ENCODE measurements at regions of chr2 and their contacts with region 1.

Region 1: DNA sequence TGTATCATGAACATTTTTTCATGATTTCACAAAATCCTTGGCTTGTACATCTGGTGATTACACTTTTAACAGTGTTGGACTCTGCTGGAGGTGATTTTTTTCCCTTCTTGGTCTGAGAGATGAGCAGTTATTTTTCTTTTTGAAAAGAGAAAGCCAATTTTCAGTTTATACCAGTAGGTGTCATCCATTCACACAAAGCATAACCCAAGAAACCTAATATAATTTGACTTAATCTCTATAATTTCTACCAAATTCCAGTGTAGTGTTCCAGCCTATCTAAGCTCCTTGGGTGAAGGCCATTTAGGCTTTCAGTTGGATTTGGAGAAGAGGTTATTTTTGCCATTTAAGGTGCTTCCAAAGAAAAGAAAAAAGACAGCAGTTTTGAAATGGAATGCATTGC is 7.7 kb upstream of the ICOS start:
- DNase-seq: peak in 4 of 9 donors; percentile 31 to 50 (median 45)
- ATAC-seq: no peak
- H3K4me3 ChIP-seq: no peak overlapping the region
- H3K4me3 Mint-ChIP-seq: no peak overlapping the region
- H3K27ac ChIP-seq: no peak overlapping the region
- H3K27ac Mint-ChIP-seq: peak overlapping the region in 2 of 9 donors; percentile 2 to 55
- H3K4me1 ChIP-seq: peaks cover 15 to 21% of the 10 kb centered on the region in 2 donors
- H3K4me1 Mint-ChIP-seq: peaks cover 13 to 46% (median 39%) of the 10 kb centered on the region in 7 donors
- H3K27me3 ChIP-seq: no peaks in the 10 kb centered on the region
- H3K27me3 Mint-ChIP-seq: peaks cover 0 to 13% (median 0%) of the 10 kb centered on the region in 5 donors

Region 2: GRCh38 chr2:203799908-203800307 is 128.9 kb before region 1 on chr2:
- CTCF ChIA-PET with region 1: no interaction called
- POLR2A ChIA-PET with region 1: no interaction called
- intact Hi-C with region 1: no loop called
- DNase-seq: no peak
- ATAC-seq: no peak
- H3K4me3 ChIP-seq: no peak overlapping the region
- H3K4me3 Mint-ChIP-seq: no peak overlapping the region
- H3K27ac ChIP-seq: no peak overlapping the region
- H3K27ac Mint-ChIP-seq: peak overlapping the region in 5 of 9 donors; percentile 9 to 42 (median 38)
- H3K4me1 ChIP-seq: peaks cover 24 to 25% of the 10 kb centered on the region in 2 donors
- H3K4me1 Mint-ChIP-seq: peaks cover 22 to 59% (median 47%) of the 10 kb centered on the region in 7 donors
- H3K27me3 ChIP-seq: no peaks in the 10 kb centered on the region
- H3K27me3 Mint-ChIP-seq: peaks cover 0 to 3% (median 0%) of the 10 kb centered on the region in 5 donors

Region 3: GRCh38 chr2:203814661-203815540 is 113.9 kb before region 1 on chr2:
- CTCF ChIA-PET with region 1: no interaction called
- POLR2A ChIA-PET with region 1: no interaction called
- intact Hi-C with region 1: no loop called
- DNase-seq: peak in 7 of 9 donors; percentile 59 to 80 (median 68)
- ATAC-seq: peak; percentile 87
- H3K4me3 ChIP-seq: peak overlapping the region; percentile 24
- H3K4me3 Mint-ChIP-seq: peak overlapping the region; percentile 55 to 90 (median 80)
- H3K27ac ChIP-seq: no peak overlapping the region
- H3K27ac Mint-ChIP-seq: peak overlapping the region; percentile 16 to 92 (median 74)
- H3K4me1 ChIP-seq: peaks cover 23 to 30% of the 10 kb centered on the region in 2 donors
- H3K4me1 Mint-ChIP-seq: peaks cover 27 to 55% (median 52%) of the 10 kb centered on the region in 7 donors
- H3K27me3 ChIP-seq: no peaks in the 10 kb centered on the region
- H3K27me3 Mint-ChIP-seq: peaks cover 0 to 6% (median 0%) of the 10 kb centered on the region in 5 donors

Region 4: GRCh38 chr2:203940039-203940438 is 11.2 kb after region 1 on chr2:
- CTCF ChIA-PET with region 1: interaction called, 8 read pairs
- POLR2A ChIA-PET with region 1: interaction called, 4 read pairs
- intact Hi-C with region 1: loop called in 1 of 2 experiments (anchors 1 kb)
- DNase-seq: no peak
- ATAC-seq: peak; percentile 23
- H3K4me3 ChIP-seq: peak overlapping the region; percentile 80
- H3K4me3 Mint-ChIP-seq: peak overlapping the region; percentile 89 to 99 (median 94)
- H3K27ac ChIP-seq: peak overlapping the region; percentile 87
- H3K27ac Mint-ChIP-seq: peak overlapping the region; percentile 83 to 98 (median 91)
- H3K4me1 ChIP-seq: peaks cover 28 to 46% of the 10 kb centered on the region in 2 donors
- H3K4me1 Mint-ChIP-seq: peaks cover 43 to 69% (median 64%) of the 10 kb centered on the region in 7 donors
- H3K27me3 ChIP-seq: no peaks in the 10 kb centered on the region
- H3K27me3 Mint-ChIP-seq: no peaks in the 10 kb centered on the region

Region 5: DNA sequence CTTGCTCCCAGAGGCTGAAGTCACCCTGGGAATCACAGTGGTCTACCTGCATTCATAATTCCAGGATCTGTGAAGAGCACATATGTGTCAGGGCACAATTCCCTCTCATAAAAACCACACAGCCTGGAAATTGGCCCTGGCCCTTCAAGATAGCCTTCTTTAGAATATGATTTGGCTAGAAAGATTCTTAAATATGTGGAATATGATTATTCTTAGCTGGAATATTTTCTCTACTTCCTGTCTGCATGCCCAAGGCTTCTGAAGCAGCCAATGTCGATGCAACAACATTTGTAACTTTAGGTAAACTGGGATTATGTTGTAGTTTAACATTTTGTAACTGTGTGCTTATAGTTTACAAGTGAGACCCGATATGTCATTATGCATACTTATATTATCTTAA is 32.0 kb after region 1 on chr2:
- CTCF ChIA-PET with region 1: no interaction called
- POLR2A ChIA-PET with region 1: interaction called, 5 read pairs
- intact Hi-C with region 1: loop called in 1 of 2 experiments (anchors 5 kb)
- DNase-seq: no peak
- ATAC-seq: no peak
- H3K4me3 ChIP-seq: no peak overlapping the region
- H3K4me3 Mint-ChIP-seq: no peak overlapping the region
- H3K27ac ChIP-seq: no peak overlapping the region
- H3K27ac Mint-ChIP-seq: peak overlapping the region in 1 of 9 donors; percentile 19
- H3K4me1 ChIP-seq: no peaks in the 10 kb centered on the region
- H3K4me1 Mint-ChIP-seq: peaks cover 12 to 36% (median 29%) of the 10 kb centered on the region in 7 donors
- H3K27me3 ChIP-seq: no peaks in the 10 kb centered on the region
- H3K27me3 Mint-ChIP-seq: no peaks in the 10 kb centered on the region

Region 6: GRCh38 chr2:204051476-204051875 is 122.6 kb after region 1 on chr2:
- CTCF ChIA-PET with region 1: interaction called, 35 read pairs
- POLR2A ChIA-PET with region 1: interaction called, 5 read pairs
- intact Hi-C with region 1: loop called (anchors 1 to 2 kb)
- DNase-seq: peak in 4 of 9 donors; percentile 15 to 28 (median 20)
- ATAC-seq: no peak
- H3K4me3 ChIP-seq: no peak overlapping the region
- H3K4me3 Mint-ChIP-seq: no peak overlapping the region
- H3K27ac ChIP-seq: no peak overlapping the region
- H3K27ac Mint-ChIP-seq: no peak overlapping the region
- H3K4me1 ChIP-seq: no peaks in the 10 kb centered on the region
- H3K4me1 Mint-ChIP-seq: peaks cover 0 to 15% (median 4%) of the 10 kb centered on the region in 7 donors
- H3K27me3 ChIP-seq: no peaks in the 10 kb centered on the region
- H3K27me3 Mint-ChIP-seq: peaks cover 0 to 14% (median 0%) of the 10 kb centered on the region in 5 donors

Region 7: GRCh38 chr2:204177977-204178540 is 249.2 kb after region 1 on chr2:
- CTCF ChIA-PET with region 1: interaction called, 10 read pairs
- POLR2A ChIA-PET with region 1: no interaction called
- intact Hi-C with region 1: loop called (anchors 1 to 2 kb)
- DNase-seq: peak; percentile 35 to 75 (median 63)
- ATAC-seq: peak; percentile 73
- H3K4me3 ChIP-seq: no peak overlapping the region
- H3K4me3 Mint-ChIP-seq: no peak overlapping the region
- H3K27ac ChIP-seq: no peak overlapping the region
- H3K27ac Mint-ChIP-seq: no peak overlapping the region
- H3K4me1 ChIP-seq: no peaks in the 10 kb centered on the region
- H3K4me1 Mint-ChIP-seq: peaks cover 0 to 10% (median 0%) of the 10 kb centered on the region in 7 donors
- H3K27me3 ChIP-seq: no peaks in the 10 kb centered on the region
- H3K27me3 Mint-ChIP-seq: peaks cover 8 to 36% (median 12%) of the 10 kb centered on the region in 5 donors

Region 8: DNA sequence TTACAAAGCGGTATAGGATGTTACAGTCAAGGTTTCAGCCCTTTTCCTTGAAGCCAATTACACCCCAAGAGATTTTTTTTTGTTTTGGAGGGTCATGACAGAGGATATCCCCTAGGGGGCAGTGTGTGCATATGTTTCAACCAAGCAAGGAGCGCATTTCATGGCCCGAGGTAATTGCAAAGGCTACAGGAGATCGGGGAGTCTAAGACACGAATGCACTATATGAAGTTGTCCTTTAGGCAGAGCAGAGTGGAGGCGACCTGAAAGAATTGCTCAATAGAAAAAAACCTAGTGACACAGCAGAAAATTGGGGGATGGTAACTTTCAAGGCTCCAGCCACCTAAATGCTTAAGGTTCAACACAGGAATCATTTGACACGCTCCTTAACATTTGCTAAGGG is 396.6 kb after region 1 on chr2:
- CTCF ChIA-PET with region 1: no interaction called
- POLR2A ChIA-PET with region 1: no interaction called
- intact Hi-C with region 1: no loop called
- DNase-seq: peak; percentile 18 to 80 (median 71)
- ATAC-seq: peak; percentile 83
- H3K4me3 ChIP-seq: no peak overlapping the region
- H3K4me3 Mint-ChIP-seq: peak overlapping the region in 1 of 10 donors; percentile 36
- H3K27ac ChIP-seq: no peak overlapping the region
- H3K27ac Mint-ChIP-seq: peak overlapping the region in 1 of 9 donors; percentile 15
- H3K4me1 ChIP-seq: no peaks in the 10 kb centered on the region
- H3K4me1 Mint-ChIP-seq: peaks cover 0 to 14% (median 4%) of the 10 kb centered on the region in 7 donors
- H3K27me3 ChIP-seq: no peaks in the 10 kb centered on the region
- H3K27me3 Mint-ChIP-seq: peaks cover 5 to 12% (median 7%) of the 10 kb centered on the region in 5 donors

Measured in naive thymus-derived CD4-positive, alpha-beta T cell (primary cell).